HCT116 (cell line): ENCODE measurements at regions of chr19 and their contacts with region 1.

Region 1: GRCh38 chr19:18203863-18204393 is at the start of gene RAB3A:
- DNase-seq: peak; percentile 100
- ATAC-seq: peak; percentile 90
- H3K4me3 ChIP-seq: peak within 1 kb of the TSS; percentile 87 to 92
- H3K27ac ChIP-seq: peak within 1 kb of the TSS; percentile 90
- H3K4me1 ChIP-seq: peaks cover 13 to 32% of the 10 kb centered on the region in 2 experiments
- H3K27me3 ChIP-seq: no peaks in the 10 kb centered on the region
- CTCF ChIP-seq: no peak
- POLR2A ChIP-seq: no peak
- RAD21 ChIP-seq: no peak
- total RNA-seq, gene RAB3A: 10.6 TPM

Region 2: GRCh38 chr19:18224525-18225354 is 20.8 kb after region 1 on chr19:
- CTCF ChIA-PET with region 1: interaction called, 31 read pairs
- POLR2A ChIA-PET with region 1: interaction called, 6 read pairs
- RAD21 ChIA-PET with region 1: interaction called, 3 read pairs
- intact Hi-C with region 1: no loop called
- DNase-seq: peak; percentile 99
- ATAC-seq: peak; percentile 98
- H3K4me3 ChIP-seq: peak overlapping the region; percentile 45 to 56
- H3K27ac ChIP-seq: peak overlapping the region; percentile 72
- H3K4me1 ChIP-seq: peaks cover 18 to 30% of the 10 kb centered on the region in 2 experiments
- H3K27me3 ChIP-seq: no peaks in the 10 kb centered on the region
- CTCF ChIP-seq: no peak
- POLR2A ChIP-seq: no peak
- RAD21 ChIP-seq: no peak

Region 3: DNA sequence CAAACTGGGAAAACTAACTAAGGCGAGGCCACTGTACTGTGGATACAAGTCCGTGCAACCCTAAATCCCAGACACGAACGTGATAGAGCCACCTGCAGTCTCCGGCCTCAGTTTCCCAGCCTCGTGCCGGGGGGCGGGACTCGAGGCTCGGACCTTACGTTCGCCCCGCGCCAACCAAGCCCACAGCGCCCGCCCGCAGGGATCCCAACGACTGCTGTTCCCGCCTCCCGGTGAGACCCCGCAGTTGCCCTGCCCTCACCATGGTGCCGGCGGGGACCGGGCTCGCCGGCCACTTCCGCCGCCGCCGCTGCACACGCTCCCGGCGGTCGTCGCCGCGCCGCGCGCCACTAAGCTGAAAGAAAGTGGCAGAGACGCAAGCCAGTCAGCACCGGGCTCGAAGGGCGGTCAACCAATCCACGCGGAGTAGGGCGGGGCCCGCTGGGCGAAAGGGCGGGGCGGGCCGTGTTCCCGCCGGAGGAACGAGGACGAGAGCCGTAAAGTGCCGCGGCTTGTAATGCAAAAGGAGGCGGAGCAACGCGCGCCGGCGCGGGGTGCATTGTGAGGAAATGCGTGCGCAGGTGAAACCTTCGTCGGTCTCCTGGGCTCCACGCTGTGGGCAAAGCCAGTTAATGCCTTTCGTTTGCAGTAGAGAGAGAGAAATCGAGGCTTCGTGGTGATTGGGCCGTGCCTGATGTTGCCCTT is 119.0 kb after region 1 on chr19 and contains the start of gene LSM4:
- CTCF ChIA-PET with region 1: no interaction called
- POLR2A ChIA-PET with region 1: no interaction called
- RAD21 ChIA-PET with region 1: no interaction called
- intact Hi-C with region 1: loop called (anchors 10 kb)
- DNase-seq: peak; percentile 98
- ATAC-seq: peak; percentile 93
- H3K4me3 ChIP-seq: peak within 1 kb of the TSS; percentile 78 to 97
- H3K27ac ChIP-seq: peak within 1 kb of the TSS; percentile 93
- H3K4me1 ChIP-seq: peaks cover 49 to 53% of the 10 kb centered on the region in 2 experiments
- H3K27me3 ChIP-seq: no peaks in the 10 kb centered on the region
- CTCF ChIP-seq: peak; percentile 29 to 51 (median 42)
- POLR2A ChIP-seq: peak; percentile 68
- RAD21 ChIP-seq: peak; percentile 69
- total RNA-seq, gene LSM4: 400 TPM

Region 4: DNA sequence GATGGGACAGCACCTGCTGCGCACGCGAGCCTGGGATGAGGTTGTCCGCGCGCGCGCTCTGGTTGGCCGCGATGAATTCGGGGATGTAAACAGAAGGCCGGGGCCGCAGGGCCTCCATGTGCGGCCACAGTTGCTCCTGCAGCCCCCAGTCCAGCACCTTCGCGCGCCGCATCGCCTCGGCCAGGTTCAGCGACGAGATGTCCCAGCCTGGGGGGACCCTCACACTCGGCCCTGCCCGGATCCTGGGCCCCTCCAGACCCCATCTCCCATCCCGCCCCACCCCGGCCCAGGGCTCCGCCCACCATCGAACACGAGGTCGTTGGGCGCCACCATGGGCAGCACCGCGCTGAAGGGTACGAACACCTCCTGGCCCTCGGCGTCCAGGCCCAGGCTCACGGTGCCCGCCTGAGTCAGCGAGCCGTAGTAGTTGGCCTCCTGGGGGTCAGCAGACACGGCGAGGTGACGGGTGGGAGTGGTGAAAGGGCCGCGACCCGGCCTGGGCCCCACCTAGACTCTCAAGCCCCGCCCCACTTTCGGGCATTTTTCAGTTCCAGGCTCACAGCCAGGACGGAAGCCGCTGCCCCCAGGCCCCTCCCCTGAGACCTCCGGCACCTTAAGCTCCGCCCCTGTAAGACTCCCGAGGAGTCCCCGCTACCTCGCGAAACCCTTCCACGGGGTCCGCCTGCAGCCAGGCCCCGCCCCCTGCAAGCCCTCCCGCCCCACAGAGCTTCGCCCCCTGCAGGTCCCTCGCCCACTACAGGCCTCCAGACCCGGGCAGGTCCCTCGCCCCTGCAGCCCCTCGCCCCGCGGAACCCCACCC is 233.0 kb after region 1 on chr19:
- CTCF ChIA-PET with region 1: no interaction called
- POLR2A ChIA-PET with region 1: no interaction called
- RAD21 ChIA-PET with region 1: no interaction called
- intact Hi-C with region 1: no loop called
- DNase-seq: no peak
- ATAC-seq: peak; percentile 69
- H3K4me3 ChIP-seq: peak overlapping the region; percentile 78 to 84
- H3K27ac ChIP-seq: peak overlapping the region; percentile 80
- H3K4me1 ChIP-seq: peaks cover 27 to 56% of the 10 kb centered on the region in 2 experiments
- H3K27me3 ChIP-seq: no peaks in the 10 kb centered on the region
- CTCF ChIP-seq: no peak
- POLR2A ChIP-seq: no peak
- RAD21 ChIP-seq: no peak